Gastrocnemius medialis (tissue), 4 donors: ENCODE measurements at regions of chr9 and their contacts with region 1.

Region 1: DNA sequence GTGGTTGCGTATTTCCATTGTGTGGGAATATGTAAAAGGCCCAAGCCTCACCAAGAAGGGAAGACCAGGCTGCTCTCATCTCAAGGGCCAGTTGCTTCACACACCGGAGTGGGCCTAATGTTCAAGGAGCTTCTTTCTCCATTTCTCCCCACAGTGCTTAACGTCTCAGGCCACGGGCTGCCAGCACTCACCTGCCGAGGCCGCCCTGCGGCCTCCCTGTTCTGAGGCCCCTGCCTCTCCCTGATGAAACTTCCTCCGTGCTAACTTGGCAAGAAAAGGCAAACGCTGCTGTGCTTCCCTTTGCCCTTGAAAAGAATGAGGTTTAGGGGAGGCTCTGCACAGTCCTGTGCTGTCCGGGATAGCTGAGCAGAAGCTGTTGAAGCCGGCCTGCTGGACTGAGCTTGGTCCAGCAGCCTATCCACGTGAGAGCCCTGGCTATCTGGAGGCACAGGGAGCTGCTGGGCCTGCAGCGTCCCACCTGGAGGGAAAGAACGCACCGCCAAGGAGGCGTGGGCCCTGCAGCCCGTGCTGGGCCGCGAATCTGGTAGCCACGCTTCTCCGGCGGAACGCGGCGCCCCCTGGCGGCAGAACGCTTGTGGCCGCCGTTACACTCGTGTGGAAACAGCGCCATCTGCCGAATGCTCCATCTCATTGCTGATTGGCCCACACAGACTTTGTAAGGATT is 73.5 kb upstream of the PRSS3 start:
- DNase-seq: peak; percentile 51 to 71
- ATAC-seq: peak; percentile 91 to 96
- H3K4me3 ChIP-seq: no peak overlapping the region
- H3K27ac ChIP-seq: no peak overlapping the region
- H3K4me1 ChIP-seq: peaks cover 4 to 5% of the 10 kb centered on the region in 2 donors
- H3K27me3 ChIP-seq: no peaks in the 10 kb centered on the region
- CTCF ChIP-seq: peak; percentile 99 to 100 (median 99)
- POLR2A ChIP-seq: no peak

Region 2: GRCh38 chr9:33623658-33624586 is 97.9 kb before region 1 on chr9:
- in situ Hi-C with region 1: loop called in 3 of 4 experiments (anchors 5 kb)
- intact Hi-C with region 1: loop called (anchors 1 kb)
- DNase-seq: peak; percentile 22 to 49
- ATAC-seq: peak; percentile 83 to 86
- H3K4me3 ChIP-seq: no peak overlapping the region
- H3K27ac ChIP-seq: no peak overlapping the region
- H3K4me1 ChIP-seq: peaks cover 9 to 16% of the 10 kb centered on the region in 2 donors
- H3K27me3 ChIP-seq: no peaks in the 10 kb centered on the region
- CTCF ChIP-seq: peak; percentile 74 to 87 (median 85)
- POLR2A ChIP-seq: no peak

Region 3: GRCh38 chr9:33628865-33629410 is 92.9 kb before region 1 on chr9:
- in situ Hi-C with region 1: loop called (anchors 5 to 10 kb)
- intact Hi-C with region 1: loop called (anchors 1 kb)
- DNase-seq: no peak
- ATAC-seq: no peak
- H3K4me3 ChIP-seq: no peak overlapping the region
- H3K27ac ChIP-seq: no peak overlapping the region
- H3K4me1 ChIP-seq: no peaks in the 10 kb centered on the region
- H3K27me3 ChIP-seq: peaks cover 0 to 5% (median 0%) of the 10 kb centered on the region in 3 donors
- CTCF ChIP-seq: no peak
- POLR2A ChIP-seq: no peak

Region 4: GRCh38 chr9:33638391-33638915 is 83.4 kb before region 1 on chr9:
- in situ Hi-C with region 1: loop called in 1 of 4 experiments (anchors 10 kb)
- intact Hi-C with region 1: no loop called
- DNase-seq: no peak
- ATAC-seq: no peak
- H3K4me3 ChIP-seq: no peak overlapping the region
- H3K27ac ChIP-seq: no peak overlapping the region
- H3K4me1 ChIP-seq: no peaks in the 10 kb centered on the region
- H3K27me3 ChIP-seq: peaks cover 0 to 16% (median 12%) of the 10 kb centered on the region in 3 donors
- CTCF ChIP-seq: no peak
- POLR2A ChIP-seq: no peak